Activated T-helper 1 cell treated with anti-CD3 and anti-CD28 coated beads, Interleukin-12 subunit alpha, Interleukin-12 subunit beta, Interleukin-2, Interleukin-4 antibody, amounts not matched to agents 30 ng/mL and 10 ng/mL and 1 ng/mL, durations not matched to agents 14 hours and 24 hours and 36 hours (primary cell): ENCODE measurements at regions of chr6 and their contacts with region 1.

Region 1: DNA sequence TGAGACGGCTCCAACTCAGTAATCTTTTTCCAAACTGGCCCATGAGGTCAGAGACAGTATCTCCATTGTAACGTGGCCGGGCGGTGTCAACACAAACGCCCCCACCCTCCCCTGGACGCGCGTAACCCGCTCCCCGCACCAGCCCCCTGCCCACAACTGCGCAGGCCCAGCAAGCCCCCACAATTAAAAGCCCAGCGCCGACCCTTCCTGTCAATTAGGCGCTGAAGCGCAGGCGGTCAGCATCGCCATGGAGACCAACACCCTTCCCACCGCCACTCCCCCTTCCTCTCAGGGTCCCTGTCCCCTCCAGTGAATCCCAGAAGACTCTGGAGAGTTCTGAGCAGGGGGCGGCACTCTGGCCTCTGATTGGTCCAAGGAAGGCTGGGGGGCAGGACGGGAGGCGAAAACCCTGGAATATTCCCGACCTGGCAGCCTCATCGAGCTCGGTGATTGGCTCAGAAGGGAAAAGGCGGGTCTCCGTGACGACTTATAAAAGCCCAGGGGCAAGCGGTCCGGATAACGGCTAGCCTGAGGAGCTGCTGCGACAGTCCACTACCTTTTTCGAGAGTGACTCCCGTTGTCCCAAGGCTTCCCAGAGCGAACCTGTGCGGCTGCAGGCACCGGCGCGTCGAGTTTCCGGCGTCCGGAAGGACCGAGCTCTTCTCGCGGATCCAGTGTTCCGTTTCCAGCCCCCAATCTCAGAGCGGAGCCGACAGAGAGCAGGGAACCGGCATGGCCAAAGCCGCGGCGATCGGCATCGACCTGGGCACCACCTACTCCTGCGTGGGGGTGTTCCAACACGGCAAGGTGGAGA is at the starts of genes HSPA1A and HSPA1L:
- DNase-seq: peak; percentile 75
- H3K4me3 Mint-ChIP-seq: peak within 1 kb of the TSS; percentile 93
- H3K27ac Mint-ChIP-seq: peak within 1 kb of the TSS; percentile 95
- H3K4me1 Mint-ChIP-seq: peaks cover 50% of the 10 kb centered on the region
- H3K27me3 Mint-ChIP-seq: no peaks in the 10 kb centered on the region
- total RNA-seq, gene HSPA1A: 173 and 175 TPM in 2 replicates
- total RNA-seq, gene HSPA1L: 2.2 and 2.9 TPM in 2 replicates

Region 2: DNA sequence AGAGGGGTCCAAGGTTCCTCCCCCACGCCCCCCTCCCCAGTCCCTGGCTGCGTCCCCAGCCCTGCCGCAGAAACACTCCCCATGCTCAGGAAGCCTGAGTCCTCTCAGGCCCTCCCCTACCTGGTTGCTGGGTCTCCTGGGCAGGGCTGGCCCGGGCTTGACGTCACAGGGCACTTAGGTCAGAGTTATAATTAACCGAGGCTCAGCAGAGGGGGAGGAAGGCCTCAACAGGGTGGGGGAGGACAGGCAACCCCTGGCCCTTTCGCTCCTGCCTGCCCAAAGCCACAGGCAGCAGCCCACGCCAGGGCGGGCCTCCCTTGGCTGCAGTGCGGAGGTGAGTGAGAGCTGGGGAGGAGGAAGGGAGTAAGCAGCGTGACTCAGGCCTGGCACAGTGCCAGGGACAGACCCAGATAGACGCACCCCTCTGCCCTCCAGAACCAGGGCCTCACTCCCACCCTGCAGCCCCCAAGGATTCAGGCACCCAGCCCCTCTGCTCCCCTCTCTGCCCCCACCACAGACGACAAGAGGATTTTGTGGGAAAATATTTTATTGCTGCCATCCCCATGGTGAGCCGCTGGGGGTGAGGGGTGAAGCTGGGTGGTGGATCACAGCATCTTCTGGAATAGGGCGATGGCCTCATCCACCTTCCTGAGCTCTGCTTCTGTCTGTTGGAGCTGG is 38.1 kb before region 1 on chr6 and contains the start of gene VWA7:
- intact Hi-C with region 1: loop called (anchors 2 kb)
- DNase-seq: peak; percentile 68
- H3K4me3 Mint-ChIP-seq: no peak within 1 kb of the TSS
- H3K27ac Mint-ChIP-seq: peak within 1 kb of the TSS; percentile 87
- H3K4me1 Mint-ChIP-seq: peaks cover 25% of the 10 kb centered on the region
- H3K27me3 Mint-ChIP-seq: no peaks in the 10 kb centered on the region
- total RNA-seq, gene VWA7: 2.9 and 5.0 TPM in 2 replicates

Region 3: DNA sequence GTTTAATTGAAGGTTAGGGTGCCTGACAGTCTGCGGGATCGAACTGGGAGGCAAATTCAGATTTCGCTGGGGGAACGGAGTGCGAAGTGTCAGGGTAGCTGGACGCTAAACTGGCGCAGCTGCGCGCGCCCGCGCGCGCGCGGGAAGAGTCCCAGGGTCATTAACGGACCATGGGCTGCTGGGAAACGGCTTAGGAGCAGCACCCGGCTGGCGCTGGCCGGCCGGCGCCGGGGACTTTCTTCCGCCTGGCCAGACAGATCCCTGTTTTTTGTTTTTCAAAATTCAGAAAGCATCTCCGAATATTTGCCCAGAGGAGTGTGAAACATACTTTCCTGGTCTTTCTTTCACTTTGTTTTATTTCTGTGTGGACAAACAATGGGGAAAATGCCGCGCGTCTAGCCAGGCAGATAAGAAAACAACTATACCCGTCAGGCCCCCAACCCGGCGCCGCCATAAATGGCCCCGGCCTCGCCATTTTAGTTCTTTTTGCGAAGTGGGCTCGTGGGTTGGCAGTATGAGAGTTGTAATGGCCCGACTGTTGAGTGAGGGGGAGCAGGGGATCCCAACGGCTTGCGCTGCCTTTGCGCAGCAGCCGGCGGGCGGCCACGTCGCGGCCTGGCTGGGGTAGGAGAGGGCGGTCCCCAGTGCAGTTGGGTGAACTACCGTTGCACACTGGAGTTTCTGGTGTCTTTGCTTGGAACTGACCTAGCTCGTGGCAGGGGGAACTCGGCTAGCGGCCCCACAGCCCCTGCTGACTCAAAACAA is 19.4 kb after region 1 on chr6:
- intact Hi-C with region 1: loop called (anchors 2 kb)
- DNase-seq: peak; percentile 72
- H3K4me3 Mint-ChIP-seq: peak overlapping the region; percentile 94
- H3K27ac Mint-ChIP-seq: peak overlapping the region; percentile 100
- H3K4me1 Mint-ChIP-seq: peaks cover 49% of the 10 kb centered on the region
- H3K27me3 Mint-ChIP-seq: no peaks in the 10 kb centered on the region

Region 4: GRCh38 chr6:32190054-32190851 is 375.0 kb after region 1 on chr6 and contains the start of gene PBX2:
- intact Hi-C with region 1: loop called (anchors 5 kb)
- DNase-seq: peak; percentile 75
- H3K4me3 Mint-ChIP-seq: peak within 1 kb of the TSS; percentile 97
- H3K27ac Mint-ChIP-seq: peak within 1 kb of the TSS; percentile 97
- H3K4me1 Mint-ChIP-seq: peaks cover 72% of the 10 kb centered on the region
- H3K27me3 Mint-ChIP-seq: no peaks in the 10 kb centered on the region
- total RNA-seq, gene PBX2: 91.9 and 94.0 TPM in 2 replicates